ENCODE measurements at regions of chr10 and their contacts with region 1.

Region 1: GRCh38 chr10:5094265-5095205 is at the start of gene AKR1C3:
- DNase-seq: peak; percentile 27 to 48
- H3K4me3 ChIP-seq: peak within 1 kb of the TSS in 1 of 4 experiments; percentile 34; a peak in 1 of 8 replicates
- H3K27ac ChIP-seq: no peak within 1 kb of the TSS
- H3K4me1 ChIP-seq: peaks cover 0 to 6% (median 1%) of the 10 kb centered on the region in 4 experiments; a peak in 3 of 7 replicates
- H3K27me3 ChIP-seq: no peaks in the 10 kb centered on the region
- CTCF ChIP-seq: peak in 2 of 3 experiments; percentile 37 to 56; a peak in 2 of 4 replicates
- EP300 ChIP-seq: no peak
- POLR2A ChIP-seq: no peak
- RAD21 ChIP-seq: peak; percentile 38 to 54; a peak in 3 of 4 replicates
- total RNA-seq, gene AKR1C3: 4.5 and 4.6 TPM in 2 replicates

Region 2: DNA sequence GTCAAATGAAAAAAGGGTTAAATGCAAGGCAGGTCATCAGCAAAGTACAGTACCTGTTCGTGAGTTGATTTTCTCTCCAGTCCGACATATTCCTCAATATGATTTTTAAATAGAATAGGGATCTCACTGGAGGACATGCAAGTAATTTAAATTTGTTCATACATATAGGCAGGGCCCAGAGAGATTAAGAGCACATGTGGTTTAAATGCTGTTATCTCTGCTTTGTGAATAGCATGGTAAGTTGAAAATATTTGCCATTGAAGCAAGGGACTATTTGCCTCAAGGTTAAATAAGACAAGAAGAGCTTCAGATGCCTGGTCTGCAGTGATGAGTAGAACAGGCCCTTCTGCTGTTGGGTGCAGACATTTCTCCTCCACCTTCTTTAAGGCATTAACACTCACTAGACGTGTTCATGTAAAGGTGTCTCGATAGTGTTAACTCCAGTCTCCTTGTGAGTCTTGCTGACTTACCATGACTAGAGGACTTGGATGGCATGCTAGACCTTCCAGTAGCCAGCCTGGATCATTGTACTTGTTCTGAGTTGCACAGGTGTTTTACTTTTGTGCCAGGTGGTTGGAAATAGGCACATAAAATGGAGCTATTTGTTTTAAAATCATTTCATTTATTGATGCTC is 15.9 kb before region 1 on chr10:
- CTCF ChIA-PET with region 1: interaction called, 17 read pairs
- POLR2A ChIA-PET with region 1: no interaction called
- DNase-seq: no peak
- H3K4me3 ChIP-seq: no peak overlapping the region; a peak in 1 of 8 replicates
- H3K27ac ChIP-seq: no peak overlapping the region
- H3K4me1 ChIP-seq: no peaks in the 10 kb centered on the region
- H3K27me3 ChIP-seq: no peaks in the 10 kb centered on the region
- CTCF ChIP-seq: no peak
- EP300 ChIP-seq: no peak
- POLR2A ChIP-seq: no peak
- RAD21 ChIP-seq: no peak

Region 3: DNA sequence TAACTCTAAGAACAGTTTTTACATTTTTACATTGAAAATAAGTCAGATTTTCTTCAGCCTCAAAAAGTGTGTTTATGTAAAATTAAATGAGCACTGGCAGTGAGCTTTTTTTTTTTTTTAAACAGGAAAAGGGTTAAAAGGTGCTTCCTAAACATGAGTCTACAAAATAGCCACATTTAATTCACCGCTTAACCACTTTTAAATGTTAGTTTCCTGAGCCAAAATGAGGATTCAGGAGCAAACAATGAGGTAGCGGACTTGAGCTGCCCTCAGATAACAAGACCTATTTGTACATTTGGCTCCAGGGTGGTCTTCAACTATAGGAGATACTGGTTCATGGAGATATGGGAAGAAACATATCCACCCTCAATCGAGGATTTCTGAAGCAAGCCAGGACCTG is 22.5 kb after region 1 on chr10:
- CTCF ChIA-PET with region 1: no interaction called
- POLR2A ChIA-PET with region 1: no interaction called
- DNase-seq: no peak
- H3K4me3 ChIP-seq: no peak overlapping the region
- H3K27ac ChIP-seq: no peak overlapping the region
- H3K4me1 ChIP-seq: no peaks in the 10 kb centered on the region
- H3K27me3 ChIP-seq: no peaks in the 10 kb centered on the region
- CTCF ChIP-seq: no peak
- EP300 ChIP-seq: no peak
- POLR2A ChIP-seq: no peak
- RAD21 ChIP-seq: no peak

Region 4: DNA sequence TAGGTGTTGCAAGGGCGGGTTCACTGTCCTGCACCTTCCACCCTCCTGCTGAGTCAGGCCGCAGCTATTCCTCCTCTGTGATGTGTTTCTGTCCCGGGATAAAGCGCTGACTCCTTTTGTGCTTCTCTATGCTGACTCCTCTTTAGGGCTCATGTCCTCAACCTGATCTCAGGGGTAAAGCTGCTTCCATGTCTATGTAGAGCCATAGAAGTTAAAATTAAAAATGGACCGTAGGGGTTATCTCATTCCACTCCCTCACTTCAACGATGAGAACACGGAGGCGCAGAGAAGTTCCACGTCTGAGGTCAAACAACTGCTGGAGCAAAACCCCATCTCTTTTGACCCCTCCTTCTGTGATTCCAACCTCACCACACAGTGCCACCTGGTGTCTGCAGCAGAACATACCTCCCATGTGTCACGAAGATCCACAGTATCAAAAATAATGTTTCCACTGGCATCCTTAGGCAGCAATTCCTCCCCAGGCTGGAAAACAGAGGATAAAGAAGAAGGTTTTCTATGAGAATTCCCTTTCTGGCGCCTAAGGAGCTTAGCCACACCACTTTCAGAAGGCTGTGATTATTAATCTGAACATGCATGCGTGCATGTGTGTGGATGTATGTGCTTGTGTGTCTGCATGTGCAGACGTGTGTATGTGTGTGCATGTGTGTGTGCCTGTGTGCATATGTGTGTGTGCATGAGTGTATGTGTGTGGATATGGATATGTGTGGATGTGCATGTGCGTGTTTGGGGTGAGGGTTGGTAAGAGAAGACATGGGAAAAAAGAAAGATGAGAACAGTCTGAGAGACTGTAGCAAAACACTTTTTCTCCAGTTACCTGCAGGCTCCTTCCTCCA is 189.0 kb after region 1 on chr10:
- CTCF ChIA-PET with region 1: interaction called, 16 read pairs
- POLR2A ChIA-PET with region 1: no interaction called
- DNase-seq: peak in 1 of 2 experiments; percentile 72
- H3K4me3 ChIP-seq: no peak overlapping the region
- H3K27ac ChIP-seq: no peak overlapping the region
- H3K4me1 ChIP-seq: peaks cover 0 to 11% (median 1%) of the 10 kb centered on the region in 4 experiments; a peak in 3 of 7 replicates
- H3K27me3 ChIP-seq: no peaks in the 10 kb centered on the region
- CTCF ChIP-seq: peak; percentile 74 to 81 (median 81)
- EP300 ChIP-seq: no peak
- POLR2A ChIP-seq: no peak
- RAD21 ChIP-seq: peak; percentile 75 to 81

Measured in H1 (cell line).